ENCODE measurements at regions of chr2 and their contacts with region 1.

Region 1: GRCh38 chr2:54899576-54900200 is 150.6 kb downstream of the RTN4 start:
- DNase-seq: no peak
- H3K4me3 ChIP-seq: no peak overlapping the region
- CTCF ChIP-seq: peak; percentile 52

Region 2: GRCh38 chr2:54879598-54880332 is 19.9 kb before region 1 on chr2:
- CTCF ChIA-PET with region 1: interaction called, 13 read pairs
- POLR2A ChIA-PET with region 1: no interaction called
- DNase-seq: no peak
- H3K4me3 ChIP-seq: no peak overlapping the region
- CTCF ChIP-seq: no peak

Region 3: DNA sequence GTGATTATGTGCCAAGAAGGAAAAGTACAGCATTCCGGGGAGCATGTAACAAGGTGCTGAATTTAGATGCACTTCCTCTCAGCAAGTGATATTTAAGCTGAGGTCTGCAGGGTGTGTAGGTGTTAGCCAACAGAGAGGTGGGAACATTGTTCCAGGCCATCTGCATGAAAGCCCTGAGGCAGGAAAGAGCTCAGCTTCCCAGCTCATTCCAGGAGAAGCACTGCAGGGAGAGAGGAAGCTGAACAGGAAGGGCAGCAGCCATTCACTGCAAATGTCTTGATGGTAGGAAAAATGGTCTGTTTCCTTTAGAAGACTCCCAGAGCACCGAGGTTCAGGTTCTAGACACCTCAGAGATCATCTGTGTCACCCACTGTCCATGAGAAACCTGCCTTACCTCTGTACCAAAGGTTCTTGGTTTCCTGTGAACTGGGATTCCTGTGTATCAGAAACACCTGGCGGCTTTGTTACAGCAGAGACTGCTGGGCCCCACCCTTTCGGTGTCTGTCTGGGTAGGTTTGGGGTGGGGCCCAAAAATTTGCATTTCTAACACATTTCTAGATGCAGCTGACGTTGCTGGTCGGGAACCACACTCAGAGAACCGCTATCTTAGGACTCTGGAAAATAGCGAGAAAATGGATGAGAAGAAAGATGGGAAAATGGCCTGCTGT is 66.6 kb after region 1 on chr2:
- CTCF ChIA-PET with region 1: interaction called, 16 read pairs
- POLR2A ChIA-PET with region 1: interaction called, 3 read pairs
- DNase-seq: no peak
- H3K4me3 ChIP-seq: no peak overlapping the region
- CTCF ChIP-seq: no peak

Region 4: DNA sequence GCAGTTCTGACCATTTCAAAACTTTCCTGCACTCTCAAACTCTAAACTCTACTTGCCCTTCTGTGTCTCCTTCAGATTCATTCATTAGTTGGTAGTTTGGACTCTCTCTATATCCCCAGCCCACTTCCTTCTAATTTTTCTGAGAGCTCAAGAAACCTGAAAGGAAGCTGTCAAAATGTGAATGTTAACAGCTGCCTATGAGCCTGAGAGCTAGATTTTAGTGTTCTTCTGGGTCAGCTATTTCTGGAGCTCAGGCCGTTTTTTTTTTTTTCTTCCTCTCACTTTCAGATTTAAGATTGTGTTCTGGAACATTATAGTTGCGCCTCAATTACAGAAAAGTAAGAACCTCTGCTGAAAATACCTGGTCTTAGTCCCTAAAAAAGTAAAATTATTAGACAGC is 77.5 kb after region 1 on chr2:
- CTCF ChIA-PET with region 1: interaction called, 16 read pairs
- POLR2A ChIA-PET with region 1: no interaction called
- DNase-seq: no peak
- H3K4me3 ChIP-seq: no peak overlapping the region
- CTCF ChIP-seq: no peak

Region 5: GRCh38 chr2:55003706-55004639 is 104.3 kb after region 1 on chr2:
- CTCF ChIA-PET with region 1: interaction called, 16 read pairs
- POLR2A ChIA-PET with region 1: no interaction called
- DNase-seq: no peak
- H3K4me3 ChIP-seq: no peak overlapping the region
- CTCF ChIP-seq: no peak

Region 6: GRCh38 chr2:55038428-55038827 is 138.7 kb after region 1 on chr2:
- CTCF ChIA-PET with region 1: interaction called, 10 read pairs
- POLR2A ChIA-PET with region 1: no interaction called
- DNase-seq: no peak
- H3K4me3 ChIP-seq: no peak overlapping the region
- CTCF ChIP-seq: no peak

Measured in AG04449 (cell line).